ENCODE measurements at regions of chr1 and their contacts with region 1.

Region 1: GRCh38 chr1:113811888-113812660 is at the start of gene RSBN1:
- DNase-seq: peak; percentile 91 to 99 (median 98)
- ATAC-seq: peak; percentile 91 to 93
- H3K4me3 Mint-ChIP-seq: peak within 1 kb of the TSS; percentile 92 to 99 (median 98)
- H3K27ac Mint-ChIP-seq: peak within 1 kb of the TSS; percentile 97 to 100 (median 98)
- H3K4me1 Mint-ChIP-seq: peaks cover 11 to 46% (median 32%) of the 10 kb centered on the region in 4 donors
- H3K27me3 Mint-ChIP-seq: no peaks in the 10 kb centered on the region
- polyA plus RNA-seq, gene RSBN1: 34.8 to 39.1 (median 37.5) TPM

Region 2: DNA sequence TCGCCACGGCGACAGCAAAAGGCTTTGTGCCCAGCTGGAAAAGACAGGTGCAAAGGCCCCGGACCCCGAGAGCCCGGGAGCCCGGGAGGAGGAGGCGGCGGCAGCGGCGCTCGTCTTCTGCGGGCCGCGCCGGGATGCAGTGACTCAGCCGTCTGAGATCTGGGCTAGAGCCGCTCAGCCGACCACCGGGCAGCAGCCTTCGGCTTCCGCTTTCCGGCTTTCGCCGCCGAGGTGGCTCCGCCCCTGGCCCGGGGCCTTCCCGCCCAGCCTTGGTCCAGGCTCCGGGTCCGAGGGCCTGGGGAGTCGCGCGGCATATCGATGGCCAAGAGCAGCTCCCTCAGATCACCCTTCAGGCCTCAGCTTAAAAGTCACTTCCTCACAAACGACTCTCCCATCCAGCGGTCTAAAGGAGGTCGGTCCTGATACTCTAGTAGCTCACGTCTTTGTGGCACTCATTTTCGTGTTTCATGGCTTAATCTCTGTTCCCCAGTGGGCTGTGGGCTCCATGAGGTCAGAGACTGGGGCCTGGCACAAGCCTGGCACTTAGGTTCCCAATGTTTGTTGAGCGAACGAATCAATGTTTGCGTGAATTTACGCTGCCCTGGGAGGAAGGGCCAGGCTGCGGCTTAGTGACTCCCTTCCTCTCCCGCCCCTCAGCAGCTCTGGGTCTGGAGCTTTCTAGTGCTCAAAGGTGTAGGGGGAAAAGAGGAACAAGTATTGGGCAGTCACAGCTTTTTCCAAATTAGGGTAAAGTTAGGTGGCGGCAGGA is 52.6 kb before region 1 on chr1 and contains the start of gene PHTF1:
- POLR2A ChIA-PET with region 1: interaction called, 44 read pairs
- DNase-seq: peak; percentile 3 to 69 (median 36)
- ATAC-seq: peak; percentile 58 to 73
- H3K4me3 Mint-ChIP-seq: peak within 1 kb of the TSS; percentile 87 to 97 (median 94)
- H3K27ac Mint-ChIP-seq: peak within 1 kb of the TSS; percentile 89 to 95 (median 92)
- H3K4me1 Mint-ChIP-seq: peaks cover 5 to 29% (median 16%) of the 10 kb centered on the region in 4 donors
- H3K27me3 Mint-ChIP-seq: no peaks in the 10 kb centered on the region
- polyA plus RNA-seq, gene PHTF1: 1.9 to 4.3 (median 3.1) TPM

Region 3: DNA sequence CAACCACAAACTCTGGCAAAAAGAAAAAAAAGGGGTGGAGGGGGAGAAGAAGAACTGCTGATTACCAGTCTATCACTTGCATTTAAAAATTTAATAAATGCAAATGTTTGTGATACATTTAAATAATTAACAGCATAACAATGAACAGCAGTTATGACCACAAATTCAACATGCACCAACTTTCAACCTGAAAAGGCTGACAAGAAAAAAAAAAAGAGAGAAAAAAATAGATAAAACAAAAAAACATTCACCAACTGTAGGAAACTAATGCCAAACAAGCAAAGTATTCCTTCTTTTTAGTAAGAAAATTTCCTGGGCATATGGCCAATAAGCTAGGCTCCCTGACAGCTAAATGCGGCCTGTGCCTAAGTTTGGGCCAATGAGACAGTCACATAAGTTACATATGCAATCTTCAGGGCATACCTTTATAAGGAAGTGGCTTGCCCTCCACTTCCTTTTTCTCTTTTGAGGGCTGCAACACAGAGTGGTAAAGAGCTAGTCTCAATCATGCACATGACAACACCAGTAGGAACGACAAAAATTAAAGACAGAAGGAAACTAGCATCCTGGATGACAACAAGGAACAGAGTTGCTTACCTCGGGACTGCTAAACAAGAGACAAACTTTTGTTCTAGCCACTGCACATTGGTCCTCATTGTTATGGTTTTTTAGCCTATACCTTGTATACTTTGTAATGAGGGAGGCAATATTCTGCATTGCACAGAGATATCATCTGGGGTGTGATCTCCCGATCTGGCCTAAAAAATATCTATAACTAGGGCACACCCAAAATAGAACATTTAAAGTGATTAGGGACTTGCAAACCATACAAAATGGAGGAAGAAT is 28.6 kb before region 1 on chr1:
- POLR2A ChIA-PET with region 1: interaction called, 30 read pairs
- DNase-seq: peak; percentile 7 to 77 (median 59)
- ATAC-seq: peak; percentile 97 to 99
- H3K4me3 Mint-ChIP-seq: peak overlapping the region; percentile 26 to 76 (median 69)
- H3K27ac Mint-ChIP-seq: peak overlapping the region in 6 of 10 donors; percentile 65 to 95 (median 88)
- H3K4me1 Mint-ChIP-seq: peaks cover 28 to 47% (median 31%) of the 10 kb centered on the region in 4 donors
- H3K27me3 Mint-ChIP-seq: no peaks in the 10 kb centered on the region

Measured in naive thymus-derived CD8-positive, alpha-beta T cell (primary cell).